Gastrocnemius medialis (tissue), 4 donors: ENCODE measurements at regions of chr20 and their contacts with region 1.

Region 1: GRCh38 chr20:62500237-62500864 is 24.6 kb upstream of the GATA5 start:
- DNase-seq: peak; percentile 66 to 79
- ATAC-seq: peak; percentile 62 to 78
- H3K4me3 ChIP-seq: no peak overlapping the region
- H3K27ac ChIP-seq: peak overlapping the region; percentile 35 to 63 (median 48)
- H3K4me1 ChIP-seq: peaks cover 19 to 33% of the 10 kb centered on the region in 2 donors
- H3K27me3 ChIP-seq: no peaks in the 10 kb centered on the region
- CTCF ChIP-seq: peak; percentile 93 to 98 (median 98)
- POLR2A ChIP-seq: no peak

Region 2: GRCh38 chr20:62407221-62407992 is 92.9 kb before region 1 on chr20 and contains the start of gene CABLES2:
- in situ Hi-C with region 1: no loop called
- intact Hi-C with region 1: loop called (anchors 5 kb)
- DNase-seq: peak; percentile 87 to 94
- ATAC-seq: peak; percentile 94 to 95
- H3K4me3 ChIP-seq: peak within 1 kb of the TSS; percentile 53 to 63 (median 62)
- H3K27ac ChIP-seq: peak within 1 kb of the TSS in 3 of 4 donors; percentile 3 to 62 (median 51)
- H3K4me1 ChIP-seq: peaks cover 20 to 25% of the 10 kb centered on the region in 2 donors
- H3K27me3 ChIP-seq: no peaks in the 10 kb centered on the region
- CTCF ChIP-seq: peak in 3 of 5 experiments; percentile 14 to 52 (median 44)
- POLR2A ChIP-seq: peak; percentile 15 to 52
- total RNA-seq, gene CABLES2: 3.6 to 9.3 (median 4.2) TPM

Region 3: GRCh38 chr20:62427172-62428001 is 73.0 kb before region 1 on chr20 and contains the start of gene RBBP8NL:
- in situ Hi-C with region 1: no loop called
- intact Hi-C with region 1: no loop called
- DNase-seq: no peak
- ATAC-seq: no peak
- H3K4me3 ChIP-seq: no peak within 1 kb of the TSS
- H3K27ac ChIP-seq: no peak within 1 kb of the TSS
- H3K4me1 ChIP-seq: no peaks in the 10 kb centered on the region
- H3K27me3 ChIP-seq: peaks cover 9 to 20% (median 19%) of the 10 kb centered on the region in 3 donors
- CTCF ChIP-seq: no peak
- POLR2A ChIP-seq: no peak
- total RNA-seq, gene RBBP8NL: not detected

Region 4: GRCh38 chr20:62583420-62583920 is 83.1 kb after region 1 on chr20:
- in situ Hi-C with region 1: loop called in 1 of 4 experiments (anchors 10 kb)
- intact Hi-C with region 1: loop called (anchors 1 kb)
- DNase-seq: no peak
- ATAC-seq: peak in 1 of 2 donors; percentile 45
- H3K4me3 ChIP-seq: no peak overlapping the region
- H3K27ac ChIP-seq: no peak overlapping the region
- H3K4me1 ChIP-seq: peaks cover 0 to 6% of the 10 kb centered on the region in 2 donors
- H3K27me3 ChIP-seq: no peaks in the 10 kb centered on the region
- CTCF ChIP-seq: peak; percentile 3 to 41 (median 29)
- POLR2A ChIP-seq: no peak

Region 5: GRCh38 chr20:62623488-62624324 is 123.4 kb after region 1 on chr20:
- in situ Hi-C with region 1: loop called in 3 of 4 experiments (anchors 5 to 25 kb)
- intact Hi-C with region 1: no loop called
- DNase-seq: peak; percentile 89 to 96
- ATAC-seq: peak; percentile 83 to 88
- H3K4me3 ChIP-seq: peak overlapping the region in 3 of 4 donors; percentile 17 to 28 (median 23)
- H3K27ac ChIP-seq: peak overlapping the region; percentile 83 to 91 (median 89)
- H3K4me1 ChIP-seq: peaks cover 32 to 33% of the 10 kb centered on the region in 2 donors
- H3K27me3 ChIP-seq: peaks cover 0 to 3% (median 0%) of the 10 kb centered on the region in 3 donors
- CTCF ChIP-seq: no peak
- POLR2A ChIP-seq: peak; percentile 78 to 85

Region 6: DNA sequence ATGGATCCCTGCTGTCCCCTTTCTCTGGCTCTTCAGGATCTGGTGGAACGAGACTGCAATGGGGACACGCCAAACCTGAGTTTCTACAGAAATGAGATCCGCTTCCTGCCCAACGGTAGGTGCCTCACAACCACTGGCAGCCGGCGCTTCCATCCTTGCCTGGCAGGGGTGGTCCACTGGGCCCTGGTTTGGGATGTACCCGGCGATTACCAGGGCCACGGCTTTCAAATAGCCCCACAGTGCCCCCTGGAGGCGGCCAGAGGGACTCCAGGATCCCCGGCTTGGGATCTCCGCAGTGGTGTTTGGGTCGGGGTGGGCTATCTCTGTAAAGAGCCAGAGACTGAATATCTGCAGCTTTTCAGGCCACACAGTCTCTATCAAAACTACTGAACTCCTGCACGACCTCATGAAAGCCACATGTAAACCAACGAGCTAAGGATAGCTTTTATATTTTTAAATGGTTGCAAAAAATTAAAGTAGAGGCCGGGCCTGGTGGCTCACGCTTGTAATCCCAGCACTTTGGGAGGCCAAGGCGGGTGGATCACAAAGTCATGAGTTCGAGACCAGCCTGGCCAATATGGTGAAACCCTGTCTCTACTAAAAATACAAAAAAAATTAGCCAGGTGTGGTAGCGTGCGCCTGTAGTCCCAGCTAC is 308.0 kb after region 1 on chr20:
- in situ Hi-C with region 1: loop called in 1 of 4 experiments (anchors 10 kb)
- intact Hi-C with region 1: loop called (anchors 5 kb)
- DNase-seq: peak in 1 of 2 donors; percentile 56
- ATAC-seq: peak; percentile 42 to 53
- H3K4me3 ChIP-seq: no peak overlapping the region
- H3K27ac ChIP-seq: no peak overlapping the region
- H3K4me1 ChIP-seq: peaks cover 15 to 27% of the 10 kb centered on the region in 2 donors
- H3K27me3 ChIP-seq: no peaks in the 10 kb centered on the region
- CTCF ChIP-seq: peak; percentile 85 to 98 (median 94)
- POLR2A ChIP-seq: no peak